ENCODE measurements at regions of chr14 and their contacts with region 1.

Region 1: DNA sequence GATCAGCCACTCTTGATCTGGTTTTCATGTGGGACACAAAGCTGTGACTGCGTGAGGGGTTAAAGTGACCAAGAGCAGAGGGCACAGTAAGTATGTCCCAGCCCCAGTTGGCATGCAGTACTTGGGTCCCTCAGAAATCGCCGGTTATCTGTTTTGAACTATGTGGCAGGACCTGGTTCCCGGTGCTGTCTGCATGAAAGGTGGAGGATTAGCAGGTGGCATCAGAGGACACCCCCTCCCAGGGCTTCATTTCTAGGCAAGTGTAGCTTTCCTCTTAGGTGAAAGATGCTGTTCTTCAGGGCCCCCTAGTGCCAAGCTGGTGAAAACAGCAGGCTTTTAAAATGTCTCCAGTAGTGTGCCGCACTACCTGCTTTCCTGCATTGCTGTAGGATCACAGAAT is 57.1 kb downstream of the ATG14 start:
- DNase-seq: peak; percentile 70
- H3K4me3 Mint-ChIP-seq: peak overlapping the region; percentile 18
- H3K27ac Mint-ChIP-seq: peak overlapping the region; percentile 88
- H3K4me1 Mint-ChIP-seq: peaks cover 29% of the 10 kb centered on the region
- H3K27me3 Mint-ChIP-seq: no peaks in the 10 kb centered on the region

Region 2: DNA sequence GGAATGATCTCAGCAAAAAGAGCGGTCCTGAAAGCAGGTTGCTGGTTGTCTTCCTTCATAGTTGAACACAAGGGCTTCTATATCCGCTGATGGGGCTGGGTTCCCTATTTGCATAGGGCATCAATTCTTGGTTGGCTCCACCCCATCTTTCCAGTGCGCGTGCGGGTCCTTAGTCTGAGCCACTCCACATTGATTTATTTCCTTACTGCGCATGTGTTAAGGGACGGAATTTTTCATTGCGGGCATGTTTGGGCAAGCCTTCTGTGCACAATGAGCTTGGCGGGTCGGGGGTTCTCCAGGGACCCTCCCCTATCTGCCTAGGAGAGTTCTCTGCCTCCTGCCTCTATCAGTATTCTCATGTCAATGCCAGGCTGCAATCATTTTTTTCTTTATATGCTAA is 141.9 kb before region 1 on chr14:
- CTCF ChIA-PET with region 1: interaction called, 32 read pairs
- POLR2A ChIA-PET with region 1: interaction called, 4 read pairs
- DNase-seq: no peak
- H3K4me3 Mint-ChIP-seq: no peak overlapping the region
- H3K27ac Mint-ChIP-seq: no peak overlapping the region
- H3K4me1 Mint-ChIP-seq: peaks cover 3% of the 10 kb centered on the region
- H3K27me3 Mint-ChIP-seq: peaks cover 5% of the 10 kb centered on the region

Region 3: GRCh38 chr14:55270832-55271565 is 83.5 kb before region 1 on chr14 and contains the start of gene FBXO34:
- CTCF ChIA-PET with region 1: interaction called, 184 read pairs
- POLR2A ChIA-PET with region 1: interaction called, 38 read pairs
- DNase-seq: peak; percentile 100
- H3K4me3 Mint-ChIP-seq: peak within 1 kb of the TSS; percentile 92
- H3K27ac Mint-ChIP-seq: peak within 1 kb of the TSS; percentile 90
- H3K4me1 Mint-ChIP-seq: peaks cover 40% of the 10 kb centered on the region
- H3K27me3 Mint-ChIP-seq: no peaks in the 10 kb centered on the region
- total RNA-seq, gene FBXO34: 25.1 to 25.5 TPM

Region 4: GRCh38 chr14:55333711-55334485 is 20.6 kb before region 1 on chr14:
- CTCF ChIA-PET with region 1: interaction called, 27 read pairs
- POLR2A ChIA-PET with region 1: interaction called, 27 read pairs
- DNase-seq: no peak
- H3K4me3 Mint-ChIP-seq: peak overlapping the region; percentile 76
- H3K27ac Mint-ChIP-seq: peak overlapping the region; percentile 88
- H3K4me1 Mint-ChIP-seq: peaks cover 81% of the 10 kb centered on the region
- H3K27me3 Mint-ChIP-seq: no peaks in the 10 kb centered on the region

Region 5: GRCh38 chr14:55341781-55342180 is 12.7 kb before region 1 on chr14:
- CTCF ChIA-PET with region 1: interaction called, 26 read pairs
- POLR2A ChIA-PET with region 1: interaction called, 18 read pairs
- DNase-seq: no peak
- H3K4me3 Mint-ChIP-seq: no peak overlapping the region
- H3K27ac Mint-ChIP-seq: no peak overlapping the region
- H3K4me1 Mint-ChIP-seq: peaks cover 52% of the 10 kb centered on the region
- H3K27me3 Mint-ChIP-seq: no peaks in the 10 kb centered on the region

Region 6: DNA sequence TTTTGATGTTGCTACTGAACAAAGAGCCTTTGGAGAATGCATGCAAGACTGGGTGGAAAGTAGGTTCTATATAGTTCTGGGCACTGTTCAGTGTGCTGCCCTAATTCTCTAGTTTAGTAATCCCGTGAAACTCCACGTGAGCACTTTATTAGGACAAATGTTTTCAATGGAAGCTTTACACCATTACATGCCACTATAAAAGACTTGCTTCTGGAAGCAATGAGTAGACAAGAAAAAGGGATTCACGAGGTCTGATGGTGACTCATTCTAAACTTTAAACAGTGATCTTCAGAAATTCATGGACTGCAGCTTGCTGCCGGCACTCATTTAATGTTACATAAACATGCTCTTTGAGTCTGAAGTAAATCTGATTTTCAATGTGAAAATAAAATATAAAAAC is 34.8 kb after region 1 on chr14:
- CTCF ChIA-PET with region 1: no interaction called
- POLR2A ChIA-PET with region 1: no interaction called
- DNase-seq: no peak
- H3K4me3 Mint-ChIP-seq: no peak overlapping the region
- H3K27ac Mint-ChIP-seq: no peak overlapping the region
- H3K4me1 Mint-ChIP-seq: peaks cover 35% of the 10 kb centered on the region
- H3K27me3 Mint-ChIP-seq: no peaks in the 10 kb centered on the region

Region 7: GRCh38 chr14:55430024-55430690 is 75.7 kb after region 1 on chr14:
- CTCF ChIA-PET with region 1: interaction called, 11 read pairs
- POLR2A ChIA-PET with region 1: no interaction called
- DNase-seq: peak; percentile 41
- H3K4me3 Mint-ChIP-seq: no peak overlapping the region
- H3K27ac Mint-ChIP-seq: no peak overlapping the region
- H3K4me1 Mint-ChIP-seq: peaks cover 23% of the 10 kb centered on the region
- H3K27me3 Mint-ChIP-seq: no peaks in the 10 kb centered on the region

Region 8: DNA sequence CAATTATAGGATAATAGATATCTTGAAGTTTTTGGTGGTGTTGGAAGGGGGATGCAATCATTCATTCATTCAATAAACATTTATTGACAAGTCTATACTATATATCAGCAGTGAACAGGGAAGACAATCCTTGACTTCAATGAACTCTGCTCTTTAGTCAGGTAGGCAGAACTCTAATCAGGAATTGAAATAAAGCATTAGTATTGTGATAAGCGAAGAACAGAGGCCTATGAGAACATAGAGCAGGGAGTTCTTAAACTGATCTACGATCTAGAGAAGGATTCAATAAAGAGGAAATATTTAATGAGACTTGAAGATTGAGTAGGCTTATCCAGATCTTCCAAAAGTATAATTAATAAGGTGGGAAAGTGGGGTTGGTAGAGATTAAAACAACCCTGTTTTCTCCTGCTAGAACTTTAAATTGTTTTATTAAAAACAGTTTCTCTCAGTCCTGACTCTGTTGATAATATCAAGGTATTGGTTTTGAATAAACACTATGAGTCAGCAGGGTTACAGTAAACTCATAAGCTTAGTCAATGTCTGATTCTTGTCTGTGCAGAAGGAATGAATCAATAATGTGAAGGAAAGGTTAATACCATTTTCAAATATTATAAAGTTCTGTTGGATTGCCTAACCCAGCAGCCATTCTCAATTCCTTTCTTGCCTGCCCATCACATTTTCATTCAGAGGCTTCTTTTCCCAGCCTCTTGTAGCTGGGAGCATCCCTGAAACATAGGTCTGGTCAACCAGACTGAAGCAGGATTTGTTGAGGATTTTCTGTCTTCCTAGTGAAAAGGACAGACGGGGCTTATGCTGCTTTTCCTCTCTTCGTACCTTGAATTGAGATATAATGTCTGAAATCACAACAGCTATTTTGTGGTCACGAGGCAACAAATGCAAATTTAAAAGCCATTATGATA is 186.6 kb after region 1 on chr14:
- CTCF ChIA-PET with region 1: no interaction called
- POLR2A ChIA-PET with region 1: no interaction called
- DNase-seq: no peak
- H3K4me3 Mint-ChIP-seq: no peak overlapping the region
- H3K27ac Mint-ChIP-seq: no peak overlapping the region
- H3K4me1 Mint-ChIP-seq: peaks cover 9% of the 10 kb centered on the region
- H3K27me3 Mint-ChIP-seq: no peaks in the 10 kb centered on the region

Measured in activated CD4-positive, alpha-beta memory T cell treated with anti-CD3 and anti-CD28 coated beads, Interleukin-2, amount 10 ng/mL, durations not matched to agents 7 days and 5 days (primary cell).